ENCODE measurements at regions of chr13 and their contacts with region 1.

Region 1: GRCh38 chr13:20940083-20940880 is 37.7 kb upstream of the XPO4 start:
- DNase-seq: no peak
- ATAC-seq: no peak
- H3K4me3 ChIP-seq: no peak overlapping the region
- H3K27ac ChIP-seq: peak overlapping the region in 5 of 10 donors; percentile 59 to 69 (median 64)
- H3K4me1 ChIP-seq: peaks cover 0 to 15% (median 5%) of the 10 kb centered on the region in 9 donors
- H3K27me3 ChIP-seq: peaks cover 0 to 4% (median 0%) of the 10 kb centered on the region in 7 donors
- CTCF ChIP-seq: no peak

Region 2: GRCh38 chr13:20828539-20829364 is 111.5 kb before region 1 on chr13:
- intact Hi-C with region 1: no loop called
- DNase-seq: peak in 1 of 2 donors; percentile 52
- ATAC-seq: peak in 6 of 8 donors; percentile 24 to 68 (median 51)
- H3K4me3 ChIP-seq: peak overlapping the region in 7 of 10 donors; percentile 14 to 43 (median 33)
- H3K27ac ChIP-seq: peak overlapping the region in 9 of 10 donors; percentile 1 to 82 (median 66)
- H3K4me1 ChIP-seq: peaks cover 0 to 22% (median 10%) of the 10 kb centered on the region in 9 donors
- H3K27me3 ChIP-seq: no peaks in the 10 kb centered on the region
- CTCF ChIP-seq: peak; percentile 55 to 87 (median 79)

Region 3: GRCh38 chr13:21060987-21061763 is 120.9 kb after region 1 on chr13 and contains the start of gene LATS2:
- intact Hi-C with region 1: loop called in 6 of 10 experiments (anchors 5 kb)
- DNase-seq: peak; percentile 97
- ATAC-seq: peak; percentile 94 to 99 (median 98)
- H3K4me3 ChIP-seq: peak within 1 kb of the TSS; percentile 72 to 100 (median 98)
- H3K27ac ChIP-seq: peak within 1 kb of the TSS; percentile 96 to 100 (median 100)
- H3K4me1 ChIP-seq: peaks cover 6 to 55% (median 45%) of the 10 kb centered on the region in 9 donors
- H3K27me3 ChIP-seq: no peaks in the 10 kb centered on the region
- CTCF ChIP-seq: peak in 8 of 9 donors; percentile 13 to 68 (median 38)
- total RNA-seq, gene LATS2: 16.2 to 46.1 (median 27.9) TPM

Region 4: GRCh38 chr13:21130116-21130515 is 189.8 kb after region 1 on chr13:
- intact Hi-C with region 1: loop called (anchors 2 to 10 kb)
- DNase-seq: no peak
- ATAC-seq: no peak
- H3K4me3 ChIP-seq: no peak overlapping the region
- H3K27ac ChIP-seq: no peak overlapping the region
- H3K4me1 ChIP-seq: no peaks in the 10 kb centered on the region
- H3K27me3 ChIP-seq: peaks cover 0 to 6% (median 0%) of the 10 kb centered on the region in 7 donors
- CTCF ChIP-seq: no peak

Region 5: GRCh38 chr13:21137696-21138095 is 197.4 kb after region 1 on chr13:
- intact Hi-C with region 1: loop called in 9 of 10 experiments (anchors 2 to 10 kb)
- DNase-seq: no peak
- ATAC-seq: no peak
- H3K4me3 ChIP-seq: no peak overlapping the region
- H3K27ac ChIP-seq: no peak overlapping the region
- H3K4me1 ChIP-seq: peaks cover 11 to 24% (median 18%) of the 10 kb centered on the region in 9 donors
- H3K27me3 ChIP-seq: no peaks in the 10 kb centered on the region
- CTCF ChIP-seq: no peak

Region 6: DNA sequence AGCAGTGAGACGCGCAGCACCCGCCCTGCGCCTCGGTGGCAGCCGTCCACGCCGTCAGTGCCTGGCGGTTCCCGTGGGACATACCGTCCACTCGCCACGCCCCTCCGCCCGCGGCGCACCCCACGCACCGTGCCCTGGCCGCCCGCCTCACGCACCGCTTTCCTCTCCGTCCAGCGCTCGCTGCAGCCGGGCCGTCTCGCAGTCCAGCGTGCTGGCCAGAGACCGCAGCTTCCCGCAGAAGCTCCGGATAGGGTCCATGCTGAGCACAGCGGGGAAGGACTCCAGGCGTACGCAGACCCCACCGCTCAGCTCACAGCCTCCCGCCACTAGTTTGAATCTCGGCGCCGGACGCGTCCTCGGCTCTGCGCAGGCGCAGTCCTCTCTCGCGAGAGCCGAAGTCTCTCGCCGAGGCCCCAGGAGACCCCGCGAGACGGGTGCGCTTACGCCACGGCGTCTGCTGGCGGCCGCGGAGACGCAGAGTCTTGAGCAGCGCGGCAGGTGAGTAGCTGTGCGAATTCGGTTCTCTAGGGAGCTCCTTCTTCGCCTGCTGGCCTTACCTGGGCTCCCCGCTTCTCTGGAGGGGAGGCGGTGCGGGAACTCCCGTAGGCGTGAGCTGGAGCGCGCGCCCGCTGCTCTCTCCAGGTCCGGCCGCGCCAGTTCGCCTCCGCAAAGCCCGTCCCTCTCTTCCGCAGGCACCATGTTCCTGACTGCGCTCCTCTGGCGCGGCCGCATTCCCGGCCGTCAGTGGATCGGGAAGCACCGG is 236.1 kb after region 1 on chr13 and contains the starts of genes MRPL57 and SKA3:
- intact Hi-C with region 1: loop called in 6 of 10 experiments (anchors 2 to 5 kb)
- DNase-seq: peak; percentile 90 to 94
- ATAC-seq: peak; percentile 98 to 100 (median 99)
- H3K4me3 ChIP-seq: peak within 1 kb of the TSS; percentile 72 to 98 (median 84)
- H3K27ac ChIP-seq: peak within 1 kb of the TSS; percentile 92 to 99 (median 96)
- H3K4me1 ChIP-seq: peaks cover 3 to 29% (median 16%) of the 10 kb centered on the region in 9 donors
- H3K27me3 ChIP-seq: no peaks in the 10 kb centered on the region
- CTCF ChIP-seq: peak in 4 of 9 donors; percentile 15 to 31 (median 22)
- total RNA-seq, gene MRPL57: 20.0 to 25.9 (median 22.9) TPM
- total RNA-seq, gene SKA3: 0.07 to 1.8 (median 0.23) TPM in 9 of 10 donors, not detected in the other

Region 7: GRCh38 chr13:21181671-21182070 is 241.4 kb after region 1 on chr13:
- intact Hi-C with region 1: loop called in 6 of 10 experiments (anchors 2 to 5 kb)
- DNase-seq: no peak
- ATAC-seq: no peak
- H3K4me3 ChIP-seq: no peak overlapping the region
- H3K27ac ChIP-seq: no peak overlapping the region
- H3K4me1 ChIP-seq: peaks cover 3 to 21% (median 13%) of the 10 kb centered on the region in 9 donors
- H3K27me3 ChIP-seq: no peaks in the 10 kb centered on the region
- CTCF ChIP-seq: no peak

Measured in heart right ventricle (tissue), 16 donors.